Ascending aorta (tissue), 2 donors: ENCODE measurements at regions of chr12 and their contacts with region 1.

Region 1: DNA sequence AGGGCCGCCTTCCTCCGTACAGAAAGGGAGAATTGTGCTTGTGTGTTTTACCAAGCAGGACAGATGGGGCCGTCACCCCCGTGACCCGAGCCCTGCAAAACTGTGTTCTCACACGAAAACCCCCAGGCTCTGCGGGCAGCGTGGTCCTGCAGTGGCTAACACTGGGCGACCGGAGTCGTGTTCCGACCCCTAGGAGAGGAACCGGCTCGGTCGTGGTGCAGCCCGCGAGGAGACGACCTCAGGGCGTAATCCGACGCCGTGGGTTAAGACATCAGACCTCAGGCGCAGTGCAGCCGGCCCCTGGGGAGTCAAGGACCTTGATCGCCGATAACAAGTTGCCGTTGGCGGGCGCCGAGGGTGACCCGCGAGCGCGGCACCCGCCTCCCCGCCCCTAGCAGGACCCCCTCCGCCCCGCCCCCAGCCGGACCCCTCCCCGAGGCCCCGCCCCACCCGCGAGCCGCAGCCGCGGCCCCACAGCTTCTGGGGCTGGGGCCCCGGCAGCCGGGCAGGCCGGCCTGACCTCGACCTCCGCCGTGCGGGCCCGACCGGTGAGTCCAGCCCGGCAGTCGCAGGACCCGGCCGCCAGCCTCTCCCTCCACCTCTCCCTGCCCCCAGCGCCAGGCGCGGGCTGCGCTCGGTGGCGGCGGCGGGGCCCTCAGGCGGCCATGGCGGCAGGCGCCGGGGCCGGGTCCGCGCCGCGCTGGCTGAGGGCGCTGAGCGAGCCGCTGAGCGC is at the start of gene CHPT1:
- DNase-seq: peak in 1 of 2 donors; percentile 86
- H3K4me3 ChIP-seq: peak within 1 kb of the TSS; percentile 92 to 99
- H3K27ac ChIP-seq: peak within 1 kb of the TSS; percentile 77 to 98
- H3K4me1 ChIP-seq: peaks cover 6 to 18% of the 10 kb centered on the region in 2 donors
- H3K27me3 ChIP-seq: no peaks in the 10 kb centered on the region
- CTCF ChIP-seq: no peak
- total RNA-seq, gene CHPT1: 56.6 TPM

Region 2: DNA sequence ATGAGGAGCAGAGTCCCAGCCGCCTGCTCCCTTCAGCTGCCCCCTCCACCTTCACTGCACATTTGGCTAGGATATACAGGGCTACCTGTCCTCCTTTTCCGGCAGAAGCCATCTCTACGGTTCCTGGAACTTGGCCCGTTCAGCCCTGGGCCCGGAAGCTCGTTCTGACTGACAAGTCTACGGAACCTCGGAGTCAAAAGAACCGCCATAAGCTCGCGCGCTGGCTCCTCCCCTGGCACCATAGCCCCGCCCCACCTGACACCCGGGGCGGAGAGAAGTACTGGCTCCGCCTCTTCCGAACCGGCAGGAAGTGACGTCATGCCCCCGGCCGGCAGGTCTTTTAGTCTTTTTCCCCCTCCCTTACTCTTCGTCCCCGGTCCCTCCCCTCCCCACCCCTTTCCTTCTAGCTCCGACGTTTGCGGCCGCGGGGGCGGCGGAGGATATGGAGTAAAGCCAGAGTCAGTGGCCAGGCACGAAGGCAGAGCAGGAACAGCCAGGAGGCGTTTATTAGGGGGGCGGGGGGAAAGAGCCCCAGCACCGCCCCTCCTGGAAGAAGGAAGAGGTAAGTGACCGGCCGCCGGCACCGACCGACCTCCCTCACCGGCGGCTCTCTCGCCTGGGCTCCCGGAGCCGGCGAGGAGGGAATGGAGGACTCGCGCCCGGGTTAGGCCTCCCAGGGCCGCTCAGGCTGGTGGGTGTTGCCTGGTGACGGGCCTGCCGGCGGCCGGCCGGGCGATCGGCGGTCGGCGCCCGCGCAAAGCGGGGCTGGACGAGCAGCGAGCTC is 1430.3 kb before region 1 on chr12 and contains the starts of genes DEPDC4 and SCYL2:
- intact Hi-C with region 1: loop called (anchors 5 kb)
- DNase-seq: peak; percentile 92 to 98
- H3K4me3 ChIP-seq: peak within 1 kb of the TSS; percentile 95 to 100
- H3K27ac ChIP-seq: peak within 1 kb of the TSS; percentile 97 to 98
- H3K4me1 ChIP-seq: peaks cover 0 to 22% of the 10 kb centered on the region in 2 donors
- H3K27me3 ChIP-seq: no peaks in the 10 kb centered on the region
- CTCF ChIP-seq: no peak
- total RNA-seq, gene DEPDC4: not detected
- total RNA-seq, gene SCYL2: 11.6 TPM

Region 3: DNA sequence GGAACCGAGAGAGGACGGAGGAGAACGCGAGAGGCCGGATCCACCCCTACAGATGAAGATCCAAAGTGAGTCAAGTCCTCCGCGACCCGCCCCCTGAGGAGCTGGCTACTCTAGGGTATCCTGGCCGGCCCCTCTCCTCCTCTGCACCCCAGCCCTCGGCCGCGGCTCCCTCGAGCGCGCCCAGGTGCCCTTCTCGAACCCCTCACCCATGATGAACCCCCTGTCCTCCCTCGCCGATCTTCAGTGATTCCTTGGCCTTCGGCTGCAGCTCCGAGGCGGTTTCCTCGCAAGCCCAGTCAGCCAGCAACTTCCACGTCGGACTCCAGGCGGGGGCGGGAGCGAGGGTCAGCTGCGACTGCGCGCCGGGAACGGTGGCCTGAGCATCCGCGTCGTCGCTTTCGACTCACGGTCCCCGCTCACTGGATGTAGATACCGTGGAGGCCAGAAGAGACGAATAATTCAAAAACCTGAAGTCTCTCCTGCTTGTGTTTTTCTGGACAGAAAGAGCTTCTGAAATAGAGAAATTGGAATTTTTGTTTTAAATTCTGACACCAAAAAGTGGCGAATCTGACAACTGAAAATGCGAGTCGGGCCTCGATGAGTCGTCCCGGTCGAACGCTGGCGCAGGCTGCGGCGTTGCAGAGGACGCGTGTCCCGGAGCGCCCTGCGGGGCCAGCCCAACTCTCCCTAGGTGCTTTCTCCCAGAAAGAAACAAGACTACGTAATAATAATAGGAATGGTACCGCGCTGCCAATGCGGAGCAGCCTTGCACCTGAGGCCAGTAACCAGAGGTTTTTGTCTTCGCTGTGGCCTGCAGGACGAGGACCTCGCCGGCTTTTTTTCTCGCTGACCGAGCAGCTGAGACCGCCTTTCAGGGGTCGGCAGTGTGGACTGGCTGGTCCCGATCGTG is 289.7 kb before region 1 on chr12 and contains the start of gene ARL1:
- intact Hi-C with region 1: loop called (anchors 5 kb)
- DNase-seq: peak; percentile 29 to 89
- H3K4me3 ChIP-seq: peak within 1 kb of the TSS; percentile 89 to 92
- H3K27ac ChIP-seq: peak within 1 kb of the TSS; percentile 89 to 94
- H3K4me1 ChIP-seq: peaks cover 0 to 3% of the 10 kb centered on the region in 2 donors
- H3K27me3 ChIP-seq: no peaks in the 10 kb centered on the region
- CTCF ChIP-seq: no peak
- total RNA-seq, gene ARL1: 16.0 TPM

Region 4: DNA sequence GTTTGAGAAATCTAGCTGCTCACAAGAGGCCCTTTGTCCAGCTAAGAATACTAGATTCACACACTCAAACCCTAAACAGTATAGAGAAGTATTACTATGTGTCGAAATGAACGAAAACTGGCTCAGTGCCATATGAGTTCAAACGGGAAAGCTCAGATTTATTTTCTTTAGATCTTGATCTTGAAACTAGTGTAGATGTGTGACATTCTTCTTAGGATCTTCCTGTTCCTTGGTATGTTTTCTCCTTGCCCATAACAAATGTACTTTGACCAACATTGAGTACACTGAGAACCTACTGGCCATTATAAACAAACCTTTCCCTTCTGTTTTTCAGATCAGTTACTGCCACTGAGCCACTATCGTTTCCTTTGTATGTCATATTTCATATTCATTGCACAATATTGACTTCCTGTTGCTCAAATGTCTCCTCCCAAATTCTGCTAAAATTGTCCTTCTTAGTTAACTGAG is 81.3 kb before region 1 on chr12:
- intact Hi-C with region 1: loop called (anchors 5 kb)
- DNase-seq: no peak
- H3K4me3 ChIP-seq: no peak overlapping the region
- H3K27ac ChIP-seq: peak overlapping the region; percentile 23 to 57
- H3K4me1 ChIP-seq: peaks cover 0 to 31% of the 10 kb centered on the region in 2 donors
- H3K27me3 ChIP-seq: no peaks in the 10 kb centered on the region
- CTCF ChIP-seq: no peak

Region 5: GRCh38 chr12:101655393-101655792 is 42.0 kb before region 1 on chr12:
- intact Hi-C with region 1: no loop called
- DNase-seq: no peak
- H3K4me3 ChIP-seq: no peak overlapping the region
- H3K27ac ChIP-seq: no peak overlapping the region
- H3K4me1 ChIP-seq: no peaks in the 10 kb centered on the region
- H3K27me3 ChIP-seq: no peaks in the 10 kb centered on the region
- CTCF ChIP-seq: no peak

Region 6: DNA sequence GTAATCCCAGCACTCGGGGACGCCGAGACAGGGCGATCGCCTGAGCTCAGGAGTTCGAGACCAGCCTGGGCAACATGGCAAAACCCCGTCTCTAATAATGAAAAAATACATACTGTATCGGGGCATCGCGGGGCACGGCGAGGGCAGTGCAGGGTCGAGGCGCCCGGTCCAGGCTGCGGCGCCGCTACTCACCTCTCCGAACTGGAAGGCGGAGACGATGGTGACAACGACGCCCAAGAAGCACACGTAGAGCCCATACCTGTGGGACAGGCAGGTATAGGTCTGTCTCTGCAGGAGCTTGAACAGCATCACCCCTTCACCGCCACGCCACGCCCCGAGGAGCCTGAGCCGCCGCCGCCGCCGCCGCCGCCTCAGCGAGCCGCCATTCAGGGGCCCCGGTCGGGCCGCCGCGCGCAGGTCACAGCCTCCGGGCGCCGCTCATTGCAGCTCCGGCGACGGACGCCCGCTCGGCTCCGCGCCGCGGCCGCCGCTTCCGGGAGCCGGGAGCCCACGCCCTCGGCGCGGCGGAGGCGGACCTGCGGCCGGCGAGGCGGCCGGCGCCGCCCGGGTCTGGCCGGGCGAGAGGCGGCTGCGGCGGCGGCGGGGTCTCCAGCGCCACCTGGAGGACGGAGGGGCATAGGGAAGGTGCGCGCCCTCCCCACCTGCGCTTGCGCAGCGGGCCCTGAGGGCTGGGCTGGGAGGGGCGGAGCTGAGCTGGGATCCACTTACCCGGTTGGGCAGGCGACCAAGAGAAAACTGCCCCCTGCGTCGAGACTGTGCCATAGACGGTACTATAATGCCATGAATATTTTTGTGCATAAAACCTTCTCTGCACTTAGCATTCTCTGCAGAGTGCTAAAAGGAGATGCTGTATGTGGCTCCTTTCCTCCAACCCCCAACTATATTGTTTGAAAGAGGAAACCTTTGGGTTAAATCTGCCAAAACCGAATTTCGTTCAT is 133.3 kb after region 1 on chr12 and contains the start of gene GNPTAB:
- intact Hi-C with region 1: loop called (anchors 2 kb)
- DNase-seq: peak; percentile 51 to 96
- H3K4me3 ChIP-seq: peak within 1 kb of the TSS; percentile 86 to 95
- H3K27ac ChIP-seq: peak within 1 kb of the TSS; percentile 72 to 75
- H3K4me1 ChIP-seq: peaks cover 0 to 10% of the 10 kb centered on the region in 2 donors
- H3K27me3 ChIP-seq: no peaks in the 10 kb centered on the region
- CTCF ChIP-seq: peak; percentile 72 to 85 (median 73)
- total RNA-seq, gene GNPTAB: 9.5 TPM

Region 7: GRCh38 chr12:102067574-102068258 is 370.4 kb after region 1 on chr12:
- intact Hi-C with region 1: no loop called
- DNase-seq: no peak
- H3K4me3 ChIP-seq: no peak overlapping the region
- H3K27ac ChIP-seq: no peak overlapping the region
- H3K4me1 ChIP-seq: no peaks in the 10 kb centered on the region
- H3K27me3 ChIP-seq: no peaks in the 10 kb centered on the region
- CTCF ChIP-seq: no peak